Ovary (tissue), 10 donors: ENCODE measurements at regions of chr2 and their contacts with region 1.

Region 1: GRCh38 chr2:26959331-26959730 is 11.1 kb upstream of the MAPRE3 start:
- DNase-seq: no peak
- H3K4me3 ChIP-seq: no peak overlapping the region
- H3K27ac ChIP-seq: no peak overlapping the region
- H3K4me1 ChIP-seq: no peaks in the 10 kb centered on the region
- H3K27me3 ChIP-seq: no peaks in the 10 kb centered on the region
- CTCF ChIP-seq: no peak
- EP300 ChIP-seq: no peak
- POLR2A ChIP-seq: no peak

Region 2: DNA sequence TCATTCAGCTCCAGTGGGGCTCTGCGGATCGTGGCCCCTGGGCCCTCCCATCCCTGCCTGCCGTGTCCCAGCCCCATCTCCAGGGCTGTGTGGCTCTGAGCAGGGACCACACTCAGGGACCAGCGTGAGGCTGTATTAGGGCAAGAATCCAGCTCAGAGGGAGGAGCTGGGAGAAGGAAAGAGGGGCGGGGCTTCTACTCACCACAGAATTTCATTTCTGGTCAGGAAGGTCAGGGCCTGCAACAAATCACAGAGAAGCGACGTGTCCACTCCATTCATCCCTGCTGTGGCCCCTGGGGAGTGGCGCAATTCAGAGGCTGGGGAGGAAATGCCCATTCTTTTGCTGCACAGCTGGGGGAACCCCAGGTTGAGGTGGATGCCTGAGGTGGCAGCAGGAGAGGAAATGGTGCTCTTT is 319.0 kb before region 1 on chr2:
- intact Hi-C with region 1: no loop called
- DNase-seq: peak in 2 of 5 donors; percentile 29 to 55
- H3K4me3 ChIP-seq: no peak overlapping the region
- H3K27ac ChIP-seq: no peak overlapping the region
- H3K4me1 ChIP-seq: no peaks in the 10 kb centered on the region
- H3K27me3 ChIP-seq: no peaks in the 10 kb centered on the region
- CTCF ChIP-seq: no peak
- EP300 ChIP-seq: no peak
- POLR2A ChIP-seq: no peak

Region 3: GRCh38 chr2:27281855-27282559 is 322.7 kb after region 1 on chr2 and contains the start of gene TRIM54:
- intact Hi-C with region 1: loop called in 3 of 4 experiments (anchors 10 kb)
- DNase-seq: no peak
- H3K4me3 ChIP-seq: no peak within 1 kb of the TSS
- H3K27ac ChIP-seq: no peak within 1 kb of the TSS
- H3K4me1 ChIP-seq: no peaks in the 10 kb centered on the region
- H3K27me3 ChIP-seq: no peaks in the 10 kb centered on the region
- CTCF ChIP-seq: no peak
- EP300 ChIP-seq: no peak
- POLR2A ChIP-seq: no peak
- total RNA-seq, gene TRIM54: 0.12 to 0.72 (median 0.49) TPM in 4 of 7 donors, not detected in the others